ENCODE measurements at regions of chr13 and their contacts with region 1.

Region 1: DNA sequence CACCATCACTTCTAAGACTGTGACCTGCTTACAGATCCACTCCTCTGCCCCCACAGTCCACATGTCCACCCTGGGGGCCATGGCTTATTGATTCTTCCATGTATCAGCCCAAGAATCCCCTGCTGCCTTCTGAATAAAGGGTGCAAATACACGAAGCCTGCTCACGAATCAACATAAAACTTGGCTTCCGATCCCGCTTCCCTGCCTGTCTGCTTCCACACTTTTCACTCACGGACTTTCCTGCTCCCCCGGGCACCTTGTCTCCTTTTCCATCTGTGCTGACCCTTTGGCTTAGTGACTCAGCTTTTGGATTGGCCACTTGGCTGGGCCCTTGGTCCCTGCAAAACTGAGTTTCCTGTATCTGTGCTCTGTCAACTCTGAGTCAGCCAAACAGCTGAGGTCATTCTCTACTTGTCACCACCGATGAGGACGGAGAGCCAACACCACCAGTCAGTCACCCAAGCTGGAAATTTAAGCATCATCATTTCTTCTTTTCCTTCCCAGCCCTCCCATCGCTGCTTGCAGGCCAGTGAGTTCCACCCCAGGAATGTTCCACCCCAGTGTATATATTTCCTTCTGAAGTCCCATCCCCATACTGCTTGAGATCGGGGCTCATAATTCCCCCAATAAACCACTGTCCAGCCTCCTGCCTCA is 11.4 kb upstream of the USP12 start:
- DNase-seq: peak; percentile 41 to 79
- ATAC-seq: peak; percentile 90 to 99 (median 96)
- H3K4me3 ChIP-seq: peak overlapping the region in 1 of 10 donors; percentile 4
- H3K27ac ChIP-seq: peak overlapping the region in 5 of 10 donors; percentile 15 to 73 (median 43)
- H3K4me1 ChIP-seq: peaks cover 0 to 16% (median 11%) of the 10 kb centered on the region in 9 donors
- H3K27me3 ChIP-seq: no peaks in the 10 kb centered on the region
- CTCF ChIP-seq: no peak

Region 2: GRCh38 chr13:26996965-26997752 is 185.8 kb before region 1 on chr13:
- intact Hi-C with region 1: loop called in 2 of 10 experiments (anchors 10 kb)
- DNase-seq: peak in 1 of 2 donors; percentile 44
- ATAC-seq: peak in 6 of 8 donors; percentile 55 to 89 (median 84)
- H3K4me3 ChIP-seq: no peak overlapping the region
- H3K27ac ChIP-seq: peak overlapping the region in 7 of 10 donors; percentile 6 to 66 (median 53)
- H3K4me1 ChIP-seq: peaks cover 0 to 31% (median 4%) of the 10 kb centered on the region in 9 donors
- H3K27me3 ChIP-seq: no peaks in the 10 kb centered on the region
- CTCF ChIP-seq: no peak

Measured in heart right ventricle (tissue), 16 donors.